Right ventricle myocardium superior (tissue), 1 donor: ENCODE measurements at regions of chr7 and their contacts with region 1.

Region 1: DNA sequence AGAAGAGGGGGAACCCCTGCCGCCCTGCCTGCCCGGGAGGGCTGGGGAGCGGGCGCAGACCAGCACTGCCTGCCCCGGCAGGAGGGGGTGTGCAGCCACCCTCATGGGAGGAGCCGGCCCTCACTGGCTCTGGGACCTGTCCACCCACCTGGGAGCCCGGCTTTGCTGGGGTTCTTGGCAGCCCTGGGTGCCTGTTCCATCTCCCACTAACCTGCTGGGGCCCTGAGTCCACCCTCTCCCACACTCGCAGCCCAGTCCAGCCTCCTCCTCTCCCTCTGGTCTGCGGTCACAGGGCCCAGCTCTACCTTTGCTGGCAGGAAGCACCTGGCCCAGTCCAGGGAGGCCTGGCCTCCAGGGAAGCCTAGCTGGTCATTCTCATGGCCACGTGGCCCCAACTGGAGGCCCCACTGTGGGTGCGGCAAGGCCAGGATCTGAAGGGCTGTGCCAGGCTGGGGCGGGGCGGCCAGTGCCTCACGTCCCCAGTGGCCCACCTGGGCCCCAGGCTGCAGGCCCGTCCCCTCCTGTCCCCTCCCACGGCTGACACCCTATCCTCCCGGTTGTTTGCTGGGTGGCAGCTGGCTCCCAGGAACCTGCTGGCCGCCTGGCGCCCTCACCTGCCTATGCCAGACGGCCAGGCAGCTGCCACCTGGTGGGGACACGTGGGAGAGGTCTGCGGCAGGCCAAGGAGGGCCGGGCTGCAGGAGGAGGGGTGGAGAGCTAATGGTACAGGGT is at the start of gene TMEM184A:
- DNase-seq: no peak
- ATAC-seq: peak; percentile 72
- total RNA-seq, gene TMEM184A: 0.30 TPM

Region 2: DNA sequence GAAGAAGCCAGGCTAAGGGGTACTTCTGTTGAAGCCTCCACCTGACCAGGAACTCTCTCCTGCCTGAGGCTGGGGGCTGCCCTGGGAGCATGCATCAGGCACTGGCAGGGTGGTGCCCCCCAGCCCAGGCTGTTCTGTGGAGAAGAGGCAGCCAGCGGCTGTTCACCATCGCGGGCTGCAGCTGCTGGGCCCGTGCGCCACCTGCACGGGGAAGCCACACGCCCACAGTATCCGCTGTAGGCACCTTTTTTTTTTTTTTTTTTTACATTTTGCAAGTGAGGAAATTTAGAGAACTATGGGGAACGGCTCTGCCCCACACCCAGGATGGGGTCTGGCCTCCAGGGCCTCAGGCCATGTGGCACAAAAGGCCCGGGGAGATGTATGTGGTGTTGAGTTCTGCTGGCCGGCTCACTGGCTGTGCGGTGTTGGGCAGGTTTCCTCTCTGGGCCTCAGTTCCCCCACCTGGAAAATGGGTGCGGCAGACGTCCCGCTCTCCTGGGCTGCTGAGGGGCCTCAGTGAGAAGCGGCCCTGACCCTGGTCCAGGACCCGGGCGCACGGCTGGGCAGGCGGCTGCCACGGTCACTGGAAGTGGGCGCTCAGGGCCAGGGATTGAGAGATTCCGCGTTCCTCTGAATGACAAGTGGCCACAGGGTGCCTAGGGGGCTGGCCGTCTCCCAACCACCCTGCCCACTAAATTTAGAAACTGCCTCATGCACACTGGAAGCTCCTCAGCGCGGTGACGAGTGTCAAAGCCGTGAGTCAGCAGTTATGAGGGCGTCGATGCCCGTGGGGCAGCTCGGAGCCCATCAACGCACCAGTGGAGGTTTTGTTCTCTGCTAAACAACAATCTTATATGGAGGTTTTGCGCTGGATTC is 43.0 kb before region 1 on chr7:
- intact Hi-C with region 1: loop called (anchors 5 kb)
- DNase-seq: peak; percentile 89
- ATAC-seq: peak; percentile 94

Region 3: DNA sequence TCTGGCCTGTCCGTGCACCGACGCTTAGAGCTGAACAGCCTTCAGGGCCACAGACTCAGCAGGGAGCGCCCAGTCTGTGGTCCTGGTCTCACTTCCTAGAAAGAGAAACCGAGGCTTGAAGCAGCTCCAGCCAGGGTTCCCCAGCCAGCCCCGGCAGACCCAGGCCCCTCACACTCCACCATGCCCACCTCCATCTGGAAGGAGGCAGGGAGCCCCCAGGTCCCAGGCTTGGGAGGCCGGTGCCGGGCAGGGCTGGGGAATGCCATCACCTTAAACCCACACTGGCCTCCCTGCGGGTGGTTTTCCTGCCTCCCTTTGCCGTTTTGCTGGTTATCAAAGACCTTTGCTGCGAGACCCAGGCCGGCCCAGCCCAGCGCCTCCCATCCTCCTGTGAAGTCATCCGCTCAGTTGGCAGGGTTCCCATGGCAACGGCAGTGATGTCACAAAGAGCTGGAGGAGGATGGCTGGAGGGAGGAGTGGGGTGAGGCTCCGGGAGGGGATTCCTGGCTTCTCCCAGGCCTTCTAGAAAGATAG is 138.1 kb after region 1 on chr7:
- intact Hi-C with region 1: no loop called
- DNase-seq: peak; percentile 45
- ATAC-seq: no peak

Region 4: DNA sequence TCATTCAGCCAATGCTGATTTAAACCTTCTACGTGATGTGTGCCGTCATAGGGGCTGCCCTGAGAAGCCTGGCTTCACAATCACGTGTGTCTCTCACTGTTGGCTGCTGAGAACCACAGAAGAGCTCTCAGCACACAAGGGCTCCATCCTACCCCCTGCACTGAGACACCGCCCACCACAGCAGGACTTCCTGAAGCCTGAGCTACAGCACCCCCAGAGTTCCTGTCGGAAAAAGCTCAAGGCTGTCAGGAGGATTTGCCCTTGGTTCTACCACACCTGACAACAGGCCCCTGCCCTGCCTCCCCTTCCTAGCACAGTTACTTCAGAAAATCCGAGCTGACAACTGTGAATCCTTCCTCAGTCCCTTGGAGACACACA is 484.9 kb after region 1 on chr7:
- intact Hi-C with region 1: no loop called
- DNase-seq: peak; percentile 13
- ATAC-seq: no peak